Right cardiac atrium (tissue), 5 donors: ENCODE measurements at regions of chr1 and their contacts with region 1.

Region 1: DNA sequence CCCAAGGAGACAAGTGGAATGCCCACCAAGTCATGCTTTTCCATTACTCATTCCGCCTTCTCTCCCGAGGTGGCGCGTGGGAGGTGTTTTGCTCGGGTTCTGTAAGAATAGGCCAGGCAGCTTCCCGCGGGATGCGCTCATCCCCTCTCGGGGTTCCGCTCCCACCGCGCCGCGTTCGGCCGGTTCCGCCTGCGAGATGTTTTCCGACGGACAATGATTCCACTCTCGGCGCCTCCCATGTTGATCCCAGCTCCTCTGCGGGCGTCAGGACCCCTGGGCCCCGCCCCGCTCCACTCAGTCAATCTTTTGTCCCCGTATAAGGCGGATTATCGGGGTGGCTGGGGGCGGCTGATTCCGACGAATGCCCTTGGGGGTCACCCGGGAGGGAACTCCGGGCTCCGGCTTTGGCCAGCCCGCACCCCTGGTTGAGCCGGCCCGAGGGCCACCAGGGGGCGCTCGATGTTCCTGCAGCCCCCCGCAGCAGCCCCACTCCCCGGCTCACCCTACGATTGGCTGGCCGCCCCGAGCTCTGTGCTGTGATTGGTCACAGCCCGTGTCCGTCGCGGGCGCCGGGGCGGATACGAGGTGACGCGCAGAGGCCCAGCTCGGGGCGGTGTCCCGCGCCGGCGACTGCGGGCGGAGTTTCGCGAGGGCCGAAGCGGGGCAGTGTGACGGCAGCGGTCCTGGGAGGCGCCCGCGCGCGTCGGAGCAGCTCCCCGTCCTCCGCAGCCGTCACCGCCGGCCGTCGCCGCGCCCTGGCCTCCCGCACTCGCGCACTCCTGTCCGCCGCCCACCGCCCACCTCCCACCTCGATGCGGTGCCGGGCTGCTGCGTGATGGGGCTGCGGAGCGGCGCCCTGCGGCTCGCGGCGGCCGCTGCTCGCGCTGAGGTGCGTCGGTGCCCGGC is at the start of gene KIF1B:
- DNase-seq: peak; percentile 99 to 100 (median 100)
- ATAC-seq: peak; percentile 98 to 99
- H3K4me3 ChIP-seq: peak within 1 kb of the TSS; percentile 81
- H3K27ac ChIP-seq: peak within 1 kb of the TSS; percentile 100
- H3K4me1 ChIP-seq: peaks cover 3% of the 10 kb centered on the region
- H3K27me3 ChIP-seq: no peaks in the 10 kb centered on the region
- total RNA-seq, gene KIF1B: 62.1 to 67.9 (median 63.6) TPM

Region 2: DNA sequence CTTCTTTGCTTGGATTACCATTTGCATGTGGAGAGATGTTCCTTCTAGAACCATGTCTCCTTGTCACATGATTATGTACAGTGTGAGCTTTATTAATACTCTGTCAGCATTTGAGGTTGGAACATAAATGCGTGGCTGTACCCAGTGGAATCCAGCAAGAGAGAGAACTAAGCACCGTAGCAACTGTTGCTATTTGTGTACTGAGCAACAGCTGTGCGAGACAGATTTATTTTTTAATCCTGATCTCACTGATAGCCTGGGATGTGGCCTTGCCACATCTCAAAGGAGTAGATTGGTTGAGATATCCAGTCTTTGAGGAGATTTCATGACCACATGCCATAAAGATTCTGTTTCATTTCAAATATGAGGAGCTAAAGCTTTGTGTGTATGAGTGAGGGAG is 43.6 kb after region 1 on chr1:
- intact Hi-C with region 1: loop called in 1 of 4 experiments (anchors 5 kb)
- DNase-seq: no peak
- ATAC-seq: peak; percentile 88 to 89
- H3K4me3 ChIP-seq: no peak overlapping the region
- H3K27ac ChIP-seq: no peak overlapping the region
- H3K4me1 ChIP-seq: peaks cover 8% of the 10 kb centered on the region
- H3K27me3 ChIP-seq: no peaks in the 10 kb centered on the region

Region 3: DNA sequence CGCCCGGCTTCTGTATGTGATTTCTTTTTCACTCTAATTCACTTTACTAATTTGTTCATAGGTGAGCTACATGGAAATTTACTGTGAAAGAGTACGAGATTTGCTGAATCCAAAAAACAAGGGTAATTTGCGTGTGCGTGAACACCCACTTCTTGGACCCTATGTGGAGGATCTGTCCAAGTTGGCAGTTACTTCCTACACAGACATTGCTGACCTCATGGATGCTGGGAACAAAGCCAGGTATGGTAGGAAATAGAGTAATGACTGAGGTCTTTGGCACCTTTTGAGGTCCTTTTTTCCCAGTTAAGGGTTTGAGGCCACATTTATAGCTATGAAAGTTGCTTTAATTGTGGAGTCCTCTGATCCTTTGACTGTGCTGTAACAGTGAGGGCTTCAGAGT is 57.2 kb after region 1 on chr1:
- intact Hi-C with region 1: loop called in 1 of 4 experiments (anchors 10 kb)
- DNase-seq: peak in 1 of 3 donors; percentile 21
- ATAC-seq: peak; percentile 45 to 65
- H3K4me3 ChIP-seq: no peak overlapping the region
- H3K27ac ChIP-seq: no peak overlapping the region
- H3K4me1 ChIP-seq: no peaks in the 10 kb centered on the region
- H3K27me3 ChIP-seq: no peaks in the 10 kb centered on the region

Region 4: GRCh38 chr1:10308001-10308400 is 97.8 kb after region 1 on chr1:
- intact Hi-C with region 1: loop called in 1 of 4 experiments (anchors 10 kb)
- DNase-seq: no peak
- ATAC-seq: no peak
- H3K4me3 ChIP-seq: no peak overlapping the region
- H3K27ac ChIP-seq: no peak overlapping the region
- H3K4me1 ChIP-seq: peaks cover 8% of the 10 kb centered on the region
- H3K27me3 ChIP-seq: no peaks in the 10 kb centered on the region

Region 5: DNA sequence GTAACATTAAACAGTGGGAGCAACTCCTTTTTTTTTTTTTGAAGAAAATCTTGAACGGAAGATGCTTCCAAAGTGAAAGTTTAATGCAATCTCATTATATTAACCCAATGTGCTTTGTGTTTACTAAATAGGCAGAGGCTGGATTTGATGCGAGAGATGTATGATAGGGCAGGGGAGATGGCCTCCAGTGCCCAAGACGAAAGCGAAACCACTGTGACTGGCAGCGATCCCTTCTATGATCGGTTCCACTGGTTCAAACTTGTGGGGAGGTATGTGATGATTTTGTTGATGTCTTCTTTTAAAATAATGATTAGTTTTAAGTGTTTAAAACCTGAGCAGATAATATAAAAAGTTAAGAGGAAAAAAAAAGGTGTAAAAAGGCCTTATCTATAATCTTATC is 114.5 kb after region 1 on chr1:
- intact Hi-C with region 1: loop called in 1 of 4 experiments (anchors 10 kb)
- DNase-seq: no peak
- ATAC-seq: no peak
- H3K4me3 ChIP-seq: no peak overlapping the region
- H3K27ac ChIP-seq: no peak overlapping the region
- H3K4me1 ChIP-seq: no peaks in the 10 kb centered on the region
- H3K27me3 ChIP-seq: no peaks in the 10 kb centered on the region

Region 6: DNA sequence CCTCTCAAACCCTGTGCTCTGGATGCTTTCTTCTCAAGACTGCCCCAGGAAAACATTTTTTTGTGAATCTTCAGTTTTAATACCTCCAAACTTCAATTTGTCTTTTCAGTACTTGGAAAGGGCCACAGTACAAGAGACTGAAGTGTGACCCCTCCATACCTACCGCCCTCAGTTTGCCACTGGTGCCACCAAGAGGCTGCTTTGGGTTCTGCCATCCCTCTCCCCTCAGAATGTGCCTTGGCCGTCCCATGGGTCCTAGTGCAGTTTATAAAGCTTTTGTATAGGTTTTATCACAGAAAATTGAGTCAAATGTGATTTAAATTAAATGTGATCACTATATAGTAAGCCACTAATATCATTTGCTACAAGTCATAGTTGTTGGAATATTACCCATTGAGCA is 127.9 kb after region 1 on chr1:
- intact Hi-C with region 1: loop called in 2 of 4 experiments (anchors 5 kb)
- DNase-seq: peak; percentile 25 to 76 (median 72)
- ATAC-seq: peak; percentile 79 to 86
- H3K4me3 ChIP-seq: no peak overlapping the region
- H3K27ac ChIP-seq: no peak overlapping the region
- H3K4me1 ChIP-seq: peaks cover 2% of the 10 kb centered on the region
- H3K27me3 ChIP-seq: no peaks in the 10 kb centered on the region